Esophagus muscularis mucosa (tissue), 4 donors: ENCODE measurements at regions of chrX and their contacts with region 1.

Region 1: GRCh38 chrX:119266364-119266995 is 30.4 kb downstream of the PGRMC1 start:
- DNase-seq: no peak
- H3K4me3 ChIP-seq: no peak overlapping the region
- H3K27ac ChIP-seq: no peak overlapping the region
- H3K4me1 ChIP-seq: peaks cover 0 to 4% (median 0%) of the 10 kb centered on the region in 4 donors
- H3K27me3 ChIP-seq: no peaks in the 10 kb centered on the region
- CTCF ChIP-seq: peak; percentile 40 to 69 (median 52)
- EP300 ChIP-seq: no peak
- POLR2A ChIP-seq: no peak

Region 2: DNA sequence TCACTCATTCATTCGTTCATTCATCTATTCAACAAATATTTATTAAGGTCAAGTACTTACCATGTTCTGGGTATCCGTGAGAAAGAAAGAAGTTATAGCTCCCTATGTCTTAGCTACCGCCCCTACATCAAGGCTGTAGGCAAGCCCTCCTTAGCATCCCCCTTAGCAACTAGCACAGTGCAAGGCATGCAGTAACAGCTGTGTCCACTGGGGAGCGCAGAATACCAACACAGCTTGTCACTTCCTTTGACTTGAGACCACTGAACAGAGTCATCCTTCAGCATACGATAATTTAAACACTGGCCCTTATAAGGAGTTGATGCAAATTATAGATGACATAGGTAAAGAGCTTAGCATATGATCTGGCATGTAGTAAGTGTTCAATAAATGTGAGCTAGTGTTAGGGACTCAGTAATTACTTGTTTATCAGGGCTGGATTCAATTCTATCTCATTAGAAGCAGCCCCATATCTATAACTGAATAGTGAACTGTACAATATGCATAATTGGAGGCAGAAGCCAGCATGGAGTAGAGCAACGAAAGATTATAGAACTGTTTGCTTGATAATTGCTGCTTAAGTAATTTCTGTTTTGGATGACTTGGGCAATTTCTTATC is 147.6 kb before region 1 on chrX:
- intact Hi-C with region 1: loop called (anchors 5 kb)
- DNase-seq: no peak
- H3K4me3 ChIP-seq: no peak overlapping the region
- H3K27ac ChIP-seq: no peak overlapping the region
- H3K4me1 ChIP-seq: no peaks in the 10 kb centered on the region
- H3K27me3 ChIP-seq: no peaks in the 10 kb centered on the region
- CTCF ChIP-seq: peak; percentile 52 to 72 (median 56)
- EP300 ChIP-seq: no peak
- POLR2A ChIP-seq: no peak

Region 3: GRCh38 chrX:119249836-119250340 is 16.6 kb before region 1 on chrX:
- intact Hi-C with region 1: no loop called
- DNase-seq: no peak
- H3K4me3 ChIP-seq: no peak overlapping the region
- H3K27ac ChIP-seq: no peak overlapping the region
- H3K4me1 ChIP-seq: no peaks in the 10 kb centered on the region
- H3K27me3 ChIP-seq: no peaks in the 10 kb centered on the region
- CTCF ChIP-seq: no peak
- EP300 ChIP-seq: no peak
- POLR2A ChIP-seq: no peak